ENCODE measurements at regions of chr12 and their contacts with region 1.

Region 1: DNA sequence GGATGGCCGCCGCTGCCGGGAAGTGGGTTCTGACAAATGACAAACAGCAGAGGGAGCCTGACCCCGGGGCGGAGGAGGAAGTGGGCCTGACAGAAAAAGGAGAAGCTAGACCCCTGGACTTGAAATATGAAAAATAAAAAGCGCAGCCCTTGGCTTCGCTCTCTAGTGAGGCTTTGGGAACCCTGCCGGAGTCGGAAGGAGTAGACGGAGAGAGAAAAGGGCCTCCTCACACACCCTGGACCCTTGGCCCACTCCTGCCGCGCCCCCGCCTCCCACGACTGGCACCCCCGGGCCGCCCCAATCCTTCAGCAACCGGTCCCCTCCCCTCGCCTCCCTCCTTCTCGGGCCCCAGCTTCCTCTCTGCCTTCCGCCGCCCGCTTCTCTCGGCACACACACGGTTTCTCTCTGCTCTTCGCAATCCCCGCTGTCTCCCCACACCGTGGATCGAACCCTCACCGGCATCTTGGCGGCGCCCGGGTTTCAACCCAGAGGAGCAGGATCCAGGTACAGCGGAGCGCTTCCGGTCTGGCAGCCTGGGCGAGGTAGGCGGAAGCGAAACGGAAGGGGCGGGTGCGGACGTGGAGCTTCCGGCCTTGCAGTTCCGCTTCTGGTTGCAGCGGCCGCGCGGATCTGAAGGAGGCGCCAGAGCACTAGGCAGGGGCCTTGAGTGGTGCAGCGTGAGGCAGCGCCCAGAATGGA is at the start of gene ARPC3:
- DNase-seq: peak; percentile 97
- H3K4me3 Mint-ChIP-seq: peak within 1 kb of the TSS; percentile 100
- H3K27ac Mint-ChIP-seq: peak within 1 kb of the TSS; percentile 100
- H3K4me1 Mint-ChIP-seq: peaks cover 49% of the 10 kb centered on the region
- H3K27me3 Mint-ChIP-seq: no peaks in the 10 kb centered on the region
- total RNA-seq, gene ARPC3: 390 to 425 TPM

Region 2: GRCh38 chr12:110468212-110469048 is 18.5 kb after region 1 on chr12 and contains the starts of genes FAM216A and GPN3:
- CTCF ChIA-PET with region 1: interaction called, 69 read pairs
- POLR2A ChIA-PET with region 1: interaction called, 7 read pairs
- DNase-seq: peak; percentile 98
- H3K4me3 Mint-ChIP-seq: peak within 1 kb of the TSS; percentile 98
- H3K27ac Mint-ChIP-seq: peak within 1 kb of the TSS; percentile 97
- H3K4me1 Mint-ChIP-seq: peaks cover 43% of the 10 kb centered on the region
- H3K27me3 Mint-ChIP-seq: no peaks in the 10 kb centered on the region
- total RNA-seq, gene FAM216A: 14.6 to 17.5 TPM
- total RNA-seq, gene GPN3: 19.0 to 21.2 TPM

Region 3: DNA sequence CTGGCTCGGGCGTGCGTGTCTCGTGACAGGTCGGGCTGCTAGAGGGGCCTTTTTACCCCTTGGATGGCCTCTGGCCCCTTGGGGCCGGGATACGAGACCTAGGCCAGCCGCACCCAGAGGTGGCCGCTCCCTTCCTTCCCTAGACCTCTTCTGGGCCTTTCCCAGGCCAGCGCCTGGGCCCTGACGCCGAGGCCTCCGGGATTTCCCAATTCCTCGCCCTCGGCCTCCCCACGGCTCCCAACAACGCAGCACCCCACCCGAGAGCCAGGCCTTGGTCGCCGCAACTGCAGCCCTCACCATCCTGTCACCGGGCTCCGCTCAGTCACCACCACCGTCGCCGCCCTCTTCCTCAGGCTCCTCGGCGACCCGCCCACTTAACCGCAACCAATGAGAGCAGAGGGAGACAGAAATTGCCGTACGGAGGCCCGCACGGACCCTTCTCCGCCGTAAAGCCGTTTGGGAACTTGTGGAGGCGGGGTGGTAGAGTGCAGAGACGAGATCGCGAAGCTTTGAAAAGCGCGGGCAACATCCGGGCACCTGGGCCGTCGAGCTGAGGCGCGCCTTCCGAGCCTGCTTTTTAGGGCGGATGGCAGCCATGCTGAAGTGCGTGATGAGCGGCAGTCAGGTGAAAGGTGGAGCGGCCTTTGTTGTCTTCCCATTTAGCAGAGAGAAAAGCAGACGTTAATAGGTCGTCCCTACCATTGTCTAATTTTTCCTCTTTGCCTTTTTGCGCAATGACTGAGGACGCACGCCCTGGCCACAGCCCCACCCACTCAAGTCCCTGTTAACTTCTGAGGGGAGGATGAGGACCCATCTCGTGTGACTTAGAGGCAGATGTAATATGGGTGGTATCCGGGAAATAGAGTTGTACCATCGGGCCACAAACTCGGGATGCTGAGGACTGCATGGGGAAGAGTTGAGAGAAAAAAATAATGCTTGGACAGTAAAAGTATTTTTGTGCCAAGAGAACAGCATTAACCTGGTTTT is 52.1 kb after region 1 on chr12 and contains the starts of genes RAD9B and VPS29:
- CTCF ChIA-PET with region 1: interaction called, 12 read pairs
- POLR2A ChIA-PET with region 1: interaction called, 3 read pairs
- DNase-seq: peak; percentile 100
- H3K4me3 Mint-ChIP-seq: peak within 1 kb of the TSS; percentile 94
- H3K27ac Mint-ChIP-seq: peak within 1 kb of the TSS; percentile 96
- H3K4me1 Mint-ChIP-seq: peaks cover 41% of the 10 kb centered on the region
- H3K27me3 Mint-ChIP-seq: no peaks in the 10 kb centered on the region
- total RNA-seq, gene RAD9B: 0.87 to 0.99 TPM
- total RNA-seq, gene VPS29: 132 to 145 TPM

Region 4: DNA sequence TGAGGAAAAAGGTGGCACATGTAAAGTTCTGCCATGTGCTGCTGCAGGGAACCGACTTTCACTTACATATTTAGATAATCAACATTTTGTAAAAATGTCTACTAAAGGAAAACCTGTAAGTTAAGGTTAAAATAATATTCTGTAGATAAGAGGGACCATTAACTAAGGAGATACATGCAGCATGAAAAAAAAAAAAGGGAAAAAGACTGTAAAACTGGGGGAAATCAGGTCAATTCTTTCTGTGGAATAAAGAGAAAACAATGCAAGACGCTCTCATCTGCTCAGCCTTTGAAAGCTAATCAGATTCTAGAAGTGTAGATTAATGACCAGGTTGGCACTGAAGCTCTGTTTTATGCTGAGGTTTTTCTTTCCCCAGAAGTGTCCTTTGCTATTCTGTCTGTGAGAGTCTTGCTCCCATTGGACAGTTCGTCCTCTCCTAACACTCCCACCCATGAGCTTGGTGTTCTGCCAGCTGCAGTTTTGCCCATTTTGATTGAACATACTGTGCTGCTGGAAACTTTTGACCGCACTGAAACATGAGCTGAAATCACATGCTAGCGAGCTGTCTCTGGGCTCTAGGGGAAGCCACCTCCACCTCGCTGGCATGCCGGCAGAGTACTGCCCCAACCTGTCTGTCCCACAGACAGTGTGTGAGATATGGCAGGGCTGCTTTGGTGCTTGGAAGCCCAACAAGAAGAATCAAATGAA is 93.5 kb after region 1 on chr12:
- CTCF ChIA-PET with region 1: interaction called, 10 read pairs
- POLR2A ChIA-PET with region 1: no interaction called
- DNase-seq: no peak
- H3K4me3 Mint-ChIP-seq: no peak overlapping the region
- H3K27ac Mint-ChIP-seq: peak overlapping the region; percentile 33
- H3K4me1 Mint-ChIP-seq: peaks cover 34% of the 10 kb centered on the region
- H3K27me3 Mint-ChIP-seq: no peaks in the 10 kb centered on the region

Region 5: GRCh38 chr12:110590806-110591326 is 140.9 kb after region 1 on chr12:
- CTCF ChIA-PET with region 1: interaction called, 10 read pairs
- POLR2A ChIA-PET with region 1: no interaction called
- DNase-seq: peak; percentile 47
- H3K4me3 Mint-ChIP-seq: peak overlapping the region; percentile 41
- H3K27ac Mint-ChIP-seq: peak overlapping the region; percentile 94
- H3K4me1 Mint-ChIP-seq: peaks cover 28% of the 10 kb centered on the region
- H3K27me3 Mint-ChIP-seq: no peaks in the 10 kb centered on the region

Region 6: GRCh38 chr12:110606253-110606611 is 156.3 kb after region 1 on chr12:
- CTCF ChIA-PET with region 1: interaction called, 68 read pairs
- POLR2A ChIA-PET with region 1: no interaction called
- DNase-seq: no peak
- H3K4me3 Mint-ChIP-seq: peak overlapping the region; percentile 73
- H3K27ac Mint-ChIP-seq: peak overlapping the region; percentile 92
- H3K4me1 Mint-ChIP-seq: peaks cover 24% of the 10 kb centered on the region
- H3K27me3 Mint-ChIP-seq: no peaks in the 10 kb centered on the region

Region 7: DNA sequence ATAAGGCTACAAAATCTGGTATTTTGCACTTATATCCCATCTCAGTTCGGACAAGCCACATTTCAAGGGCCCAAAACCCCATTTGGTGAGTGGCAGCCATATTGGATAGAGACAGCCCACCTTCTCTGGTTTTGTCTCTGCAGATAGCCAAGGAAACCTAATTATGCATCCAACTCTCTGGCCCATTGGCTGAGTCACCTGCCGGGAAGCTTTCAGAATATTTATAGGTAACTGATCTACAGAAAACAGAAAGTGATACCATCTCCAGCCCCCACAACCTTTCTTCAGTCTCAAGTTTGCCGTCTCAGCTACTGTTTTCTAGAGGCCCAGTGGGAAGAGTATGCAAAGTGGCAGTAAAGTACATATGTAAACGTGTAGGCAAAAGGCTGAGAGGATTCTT is 326.5 kb after region 1 on chr12:
- CTCF ChIA-PET with region 1: no interaction called
- POLR2A ChIA-PET with region 1: no interaction called
- DNase-seq: peak; percentile 48
- H3K4me3 Mint-ChIP-seq: no peak overlapping the region
- H3K27ac Mint-ChIP-seq: peak overlapping the region; percentile 82
- H3K4me1 Mint-ChIP-seq: peaks cover 68% of the 10 kb centered on the region
- H3K27me3 Mint-ChIP-seq: no peaks in the 10 kb centered on the region